WTC11 (cell line): ENCODE measurements at regions of chr17 and their contacts with region 1.

Region 1: GRCh38 chr17:73429440-73430164 is 117.8 kb upstream of the CDC42EP4 start:
- DNase-seq: peak; percentile 93
- ATAC-seq: peak; percentile 97
- H3K4me3 Mint-ChIP-seq: no peak overlapping the region
- H3K27ac Mint-ChIP-seq: no peak overlapping the region
- H3K4me1 Mint-ChIP-seq: peaks cover 19% of the 10 kb centered on the region
- H3K27me3 Mint-ChIP-seq: no peaks in the 10 kb centered on the region
- CTCF ChIP-seq: peak; percentile 95

Region 2: DNA sequence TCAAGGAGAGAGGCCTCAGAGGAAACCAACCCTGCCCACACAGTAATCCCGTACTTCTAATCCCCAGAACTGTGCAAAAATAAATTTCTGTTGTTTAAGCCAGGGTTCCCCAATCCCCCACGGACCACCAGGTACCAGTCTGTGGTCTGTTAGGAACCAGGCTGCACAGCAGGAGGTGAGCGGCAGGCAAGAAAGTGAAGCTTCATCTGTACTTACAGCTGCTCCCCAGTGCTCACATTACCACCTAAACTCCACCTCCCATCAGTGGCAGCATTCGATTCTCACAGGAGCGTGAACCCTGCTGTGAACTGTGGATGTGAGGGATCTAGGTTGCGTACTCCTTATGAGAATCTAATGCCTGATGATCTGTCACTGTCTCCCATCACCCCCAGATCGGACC is 16.7 kb before region 1 on chr17:
- CTCF ChIA-PET with region 1: no interaction called
- POLR2A ChIA-PET with region 1: no interaction called
- DNase-seq: no peak
- ATAC-seq: no peak
- H3K4me3 Mint-ChIP-seq: no peak overlapping the region
- H3K27ac Mint-ChIP-seq: no peak overlapping the region
- H3K4me1 Mint-ChIP-seq: 0 out of 2 replicates have a peak, but pooled peaks cover 4% of the 10 kb centered on the region
- H3K27me3 Mint-ChIP-seq: no peaks in the 10 kb centered on the region
- CTCF ChIP-seq: no peak

Region 3: GRCh38 chr17:73586921-73587602 is 157.5 kb after region 1 on chr17:
- CTCF ChIA-PET with region 1: interaction called, 17 read pairs
- POLR2A ChIA-PET with region 1: no interaction called
- DNase-seq: no peak
- ATAC-seq: no peak
- H3K4me3 Mint-ChIP-seq: no peak overlapping the region
- H3K27ac Mint-ChIP-seq: no peak overlapping the region
- H3K4me1 Mint-ChIP-seq: peaks cover 51% of the 10 kb centered on the region
- H3K27me3 Mint-ChIP-seq: no peaks in the 10 kb centered on the region
- CTCF ChIP-seq: no peak